ENCODE measurements at regions of chr6 and their contacts with region 1.

Region 1: GRCh38 chr6:5115168-5115567 is 30.0 kb downstream of the PPP1R3G start:
- DNase-seq: no peak
- ATAC-seq: peak; percentile 24 to 65

Region 2: GRCh38 chr6:5053038-5053437 is 62.1 kb before region 1 on chr6:
- intact Hi-C with region 1: loop called (anchors 5 to 10 kb)
- DNase-seq: no peak
- ATAC-seq: no peak

Region 3: GRCh38 chr6:5058254-5058653 is 56.9 kb before region 1 on chr6:
- intact Hi-C with region 1: loop called (anchors 5 to 10 kb)
- DNase-seq: no peak
- ATAC-seq: peak in 1 of 2 donors; percentile 14

Region 4: GRCh38 chr6:5078121-5078669 is 37.0 kb before region 1 on chr6:
- intact Hi-C with region 1: loop called in 1 of 2 experiments (anchors 2 kb)
- DNase-seq: no peak
- ATAC-seq: peak; percentile 50 to 63